GM12878 (cell line): ENCODE measurements at regions of chr6 and their contacts with region 1.

Region 1: DNA sequence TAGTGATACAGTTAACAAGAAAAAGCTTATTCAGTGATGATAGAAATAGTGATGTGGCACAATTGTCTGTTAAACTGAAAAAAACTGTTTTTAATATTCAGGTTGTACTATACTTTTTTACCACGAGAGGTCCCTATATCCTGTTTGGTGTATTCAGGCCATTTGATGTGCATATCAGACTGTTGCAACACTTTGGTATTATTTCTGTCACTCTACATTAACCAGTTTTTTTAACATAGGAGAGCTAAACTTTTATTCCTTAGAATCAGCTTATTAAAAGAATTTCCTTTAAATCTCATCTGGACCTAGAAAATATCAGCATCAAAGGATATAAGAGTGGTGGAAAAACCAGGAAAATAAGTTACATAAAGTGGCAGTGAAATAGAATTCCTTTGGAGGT is 36.8 kb downstream of the TSPYL4 start:
- DNase-seq: no peak
- ATAC-seq: peak; percentile 69
- H3K4me3 ChIP-seq: no peak overlapping the region
- H3K27ac ChIP-seq: no peak overlapping the region
- H3K4me1 ChIP-seq: no peaks in the 10 kb centered on the region
- H3K27me3 ChIP-seq: no peaks in the 10 kb centered on the region
- CTCF ChIP-seq: peak in 2 of 3 experiments; percentile 30 to 41; a peak in 3 of 6 replicates
- EP300 ChIP-seq: no peak
- POLR2A ChIP-seq: no peak
- RAD21 ChIP-seq: peak; percentile 31; the same call in 1 of the 2 replicates

Region 2: GRCh38 chr6:116118608-116119007 is 98.5 kb before region 1 on chr6:
- CTCF ChIA-PET with region 1: interaction called, 10 read pairs
- POLR2A ChIA-PET with region 1: no interaction called
- RAD21 ChIA-PET with region 1: no interaction called
- SMC1A ChIA-PET with region 1: interaction called, 4 read pairs
- in situ Hi-C with region 1: no loop called
- intact Hi-C with region 1: no loop called
- DNase-seq: no peak
- ATAC-seq: no peak
- H3K4me3 ChIP-seq: no peak overlapping the region
- H3K27ac ChIP-seq: no peak overlapping the region
- H3K4me1 ChIP-seq: no peaks in the 10 kb centered on the region
- H3K27me3 ChIP-seq: no peaks in the 10 kb centered on the region
- CTCF ChIP-seq: no peak
- EP300 ChIP-seq: no peak
- POLR2A ChIP-seq: no peak
- RAD21 ChIP-seq: no peak

Region 3: DNA sequence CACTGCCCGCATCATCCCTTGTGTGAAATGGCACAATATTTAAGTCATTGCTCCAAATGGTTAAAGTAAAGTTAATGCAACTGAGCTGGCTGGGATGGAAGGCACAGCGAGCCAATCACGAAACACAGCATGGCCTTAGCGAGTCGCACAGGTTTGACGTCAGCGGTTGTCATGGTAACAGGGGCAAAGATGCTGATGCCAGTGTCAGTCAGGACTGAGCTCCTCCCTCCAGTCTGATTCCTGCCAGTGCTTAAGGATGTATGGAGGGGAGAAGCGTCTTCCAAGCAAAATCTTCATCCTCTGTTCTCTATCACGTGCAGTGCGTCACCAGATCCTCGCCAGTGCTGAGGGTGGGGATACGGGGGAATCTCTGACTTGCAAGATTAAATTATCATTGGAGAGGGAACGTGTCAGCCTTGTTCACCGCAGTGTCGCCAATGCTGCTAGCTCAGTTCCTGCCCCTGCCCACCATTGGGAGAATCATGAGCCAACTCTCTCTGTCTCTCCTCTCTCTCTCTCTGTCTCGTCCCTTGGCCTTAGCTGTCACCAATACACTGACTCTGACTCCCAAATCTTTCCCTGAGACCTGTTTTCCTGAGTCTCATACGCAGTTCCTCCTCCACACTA is 12.3 kb after region 1 on chr6:
- CTCF ChIA-PET with region 1: interaction called, 13 read pairs
- POLR2A ChIA-PET with region 1: no interaction called
- RAD21 ChIA-PET with region 1: interaction called, 4 read pairs
- SMC1A ChIA-PET with region 1: interaction called, 3 read pairs
- in situ Hi-C with region 1: no loop called
- intact Hi-C with region 1: no loop called
- DNase-seq: no peak
- ATAC-seq: peak; percentile 21; the same call in 1 of the 3 replicates
- H3K4me3 ChIP-seq: no peak overlapping the region
- H3K27ac ChIP-seq: no peak overlapping the region
- H3K4me1 ChIP-seq: no peaks in the 10 kb centered on the region
- H3K27me3 ChIP-seq: no peaks in the 10 kb centered on the region
- CTCF ChIP-seq: no peak
- EP300 ChIP-seq: no peak
- POLR2A ChIP-seq: no peak
- RAD21 ChIP-seq: no peak

Region 4: GRCh38 chr6:116253505-116254296 is 36.6 kb after region 1 on chr6 and contains the start of gene TSPYL4:
- CTCF ChIA-PET with region 1: interaction called, 15 read pairs
- POLR2A ChIA-PET with region 1: no interaction called
- RAD21 ChIA-PET with region 1: interaction called, 3 read pairs
- SMC1A ChIA-PET with region 1: interaction called, 3 read pairs
- in situ Hi-C with region 1: no loop called
- intact Hi-C with region 1: no loop called
- DNase-seq: peak; percentile 87
- ATAC-seq: peak; percentile 96
- H3K4me3 ChIP-seq: peak within 1 kb of the TSS; percentile 94
- H3K27ac ChIP-seq: peak within 1 kb of the TSS; percentile 90
- H3K4me1 ChIP-seq: peaks cover 13% of the 10 kb centered on the region
- H3K27me3 ChIP-seq: no peaks in the 10 kb centered on the region
- CTCF ChIP-seq: no peak
- EP300 ChIP-seq: no peak
- POLR2A ChIP-seq: peak; percentile 84
- RAD21 ChIP-seq: no peak
- polyA plus RNA-seq, gene TSPYL4: 1.5 to 2.2 TPM

Region 5: GRCh38 chr6:116268589-116269293 is 51.7 kb after region 1 on chr6:
- CTCF ChIA-PET with region 1: interaction called, 17 read pairs
- POLR2A ChIA-PET with region 1: no interaction called
- RAD21 ChIA-PET with region 1: interaction called, 15 read pairs
- SMC1A ChIA-PET with region 1: interaction called, 7 read pairs
- in situ Hi-C with region 1: no loop called
- intact Hi-C with region 1: no loop called
- DNase-seq: no peak
- ATAC-seq: peak; percentile 86
- H3K4me3 ChIP-seq: no peak overlapping the region
- H3K27ac ChIP-seq: no peak overlapping the region
- H3K4me1 ChIP-seq: no peaks in the 10 kb centered on the region
- H3K27me3 ChIP-seq: no peaks in the 10 kb centered on the region
- CTCF ChIP-seq: peak; percentile 70 to 97 (median 74); a peak in 5 of 6 replicates
- EP300 ChIP-seq: no peak
- POLR2A ChIP-seq: no peak
- RAD21 ChIP-seq: peak; percentile 83

Region 6: DNA sequence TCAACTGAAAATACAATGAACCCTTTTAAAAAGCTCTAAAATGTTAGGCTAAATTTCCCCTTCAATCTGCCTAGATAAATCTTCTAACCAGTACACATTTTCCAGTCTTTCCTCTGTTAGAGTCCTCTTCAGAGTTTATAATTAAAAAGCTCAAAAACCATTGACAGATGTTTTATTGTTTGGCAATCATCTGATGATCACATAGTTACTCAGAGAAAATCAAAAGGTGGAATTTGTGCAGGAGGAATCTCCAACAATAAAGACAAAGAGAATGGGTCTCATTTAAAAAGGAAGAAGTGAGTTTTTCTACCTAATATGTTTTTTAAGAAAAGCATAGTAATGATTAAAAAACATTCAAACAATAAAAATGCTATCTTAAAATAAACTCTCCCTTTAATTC is 325.4 kb after region 1 on chr6:
- CTCF ChIA-PET with region 1: interaction called, 14 read pairs
- POLR2A ChIA-PET with region 1: no interaction called
- RAD21 ChIA-PET with region 1: no interaction called
- SMC1A ChIA-PET with region 1: no interaction called
- in situ Hi-C with region 1: no loop called
- intact Hi-C with region 1: no loop called
- DNase-seq: no peak
- ATAC-seq: no peak
- H3K4me3 ChIP-seq: no peak overlapping the region
- H3K27ac ChIP-seq: no peak overlapping the region
- H3K4me1 ChIP-seq: no peaks in the 10 kb centered on the region
- H3K27me3 ChIP-seq: peaks cover 0 to 8% of the 10 kb centered on the region in 2 experiments; a peak in 1 of 4 replicates
- CTCF ChIP-seq: no peak
- EP300 ChIP-seq: no peak
- POLR2A ChIP-seq: no peak
- RAD21 ChIP-seq: no peak

Region 7: GRCh38 chr6:116561377-116562018 is 344.4 kb after region 1 on chr6:
- CTCF ChIA-PET with region 1: interaction called, 16 read pairs
- POLR2A ChIA-PET with region 1: no interaction called
- RAD21 ChIA-PET with region 1: interaction called, 4 read pairs
- SMC1A ChIA-PET with region 1: interaction called, 14 read pairs
- in situ Hi-C with region 1: no loop called
- intact Hi-C with region 1: no loop called
- DNase-seq: no peak
- ATAC-seq: peak; percentile 87
- H3K4me3 ChIP-seq: no peak overlapping the region
- H3K27ac ChIP-seq: no peak overlapping the region
- H3K4me1 ChIP-seq: no peaks in the 10 kb centered on the region
- H3K27me3 ChIP-seq: no peaks in the 10 kb centered on the region; a peak in 1 of 4 replicates
- CTCF ChIP-seq: peak; percentile 84 to 93 (median 88)
- EP300 ChIP-seq: no peak
- POLR2A ChIP-seq: no peak
- RAD21 ChIP-seq: peak; percentile 81